Dendritic cell treated with granulocyte-macrophage colony-stimulating factor and Interleukin-4, amounts not matched to agents 40 ng/mL and 50 ng/mL, for 4 days (primary cell): ENCODE measurements at regions of chr13 and their contacts with region 1.

Region 1: GRCh38 chr13:85806553-85807175 is 7.4 kb upstream of the SLITRK6 start:
- H3K4me3 Mint-ChIP-seq: no peak overlapping the region
- H3K27ac Mint-ChIP-seq: no peak overlapping the region
- H3K4me1 Mint-ChIP-seq: no peaks in the 10 kb centered on the region
- H3K27me3 Mint-ChIP-seq: no peaks in the 10 kb centered on the region

Region 2: GRCh38 chr13:84896128-84896527 is 910.5 kb before region 1 on chr13:
- intact Hi-C with region 1: loop called (anchors 1 kb)
- H3K4me3 Mint-ChIP-seq: no peak overlapping the region
- H3K27ac Mint-ChIP-seq: no peak overlapping the region
- H3K4me1 Mint-ChIP-seq: no peaks in the 10 kb centered on the region
- H3K27me3 Mint-ChIP-seq: no peaks in the 10 kb centered on the region

Region 3: GRCh38 chr13:84917252-84917878 is 889.3 kb before region 1 on chr13:
- intact Hi-C with region 1: loop called (anchors 2 kb)
- H3K4me3 Mint-ChIP-seq: no peak overlapping the region
- H3K27ac Mint-ChIP-seq: no peak overlapping the region
- H3K4me1 Mint-ChIP-seq: no peaks in the 10 kb centered on the region
- H3K27me3 Mint-ChIP-seq: no peaks in the 10 kb centered on the region

Region 4: GRCh38 chr13:85243831-85244230 is 562.8 kb before region 1 on chr13:
- intact Hi-C with region 1: no loop called
- H3K4me3 Mint-ChIP-seq: no peak overlapping the region
- H3K27ac Mint-ChIP-seq: no peak overlapping the region
- H3K4me1 Mint-ChIP-seq: no peaks in the 10 kb centered on the region
- H3K27me3 Mint-ChIP-seq: no peaks in the 10 kb centered on the region